ENCODE measurements at regions of chr15 and their contacts with region 1.

Region 1: GRCh38 chr15:61974759-61975158 is 85.5 kb downstream of the VPS13C start:
- DNase-seq: no peak
- ATAC-seq: no peak
- H3K4me3 ChIP-seq: no peak overlapping the region
- H3K27ac ChIP-seq: no peak overlapping the region
- H3K4me1 ChIP-seq: no peaks in the 10 kb centered on the region
- H3K27me3 ChIP-seq: no peaks in the 10 kb centered on the region
- CTCF ChIP-seq: no peak
- EP300 ChIP-seq: no peak
- POLR2A ChIP-seq: no peak
- RAD21 ChIP-seq: no peak

Region 2: GRCh38 chr15:61906961-61907752 is 67.6 kb before region 1 on chr15:
- CTCF ChIA-PET with region 1: no interaction called
- POLR2A ChIA-PET with region 1: no interaction called
- in situ Hi-C with region 1: no loop called
- intact Hi-C with region 1: no loop called
- DNase-seq: no peak
- ATAC-seq: no peak
- H3K4me3 ChIP-seq: no peak overlapping the region
- H3K27ac ChIP-seq: no peak overlapping the region
- H3K4me1 ChIP-seq: no peaks in the 10 kb centered on the region
- H3K27me3 ChIP-seq: no peaks in the 10 kb centered on the region
- CTCF ChIP-seq: no peak
- EP300 ChIP-seq: no peak
- POLR2A ChIP-seq: no peak
- RAD21 ChIP-seq: no peak

Region 3: GRCh38 chr15:62071711-62072308 is 97.1 kb after region 1 on chr15:
- CTCF ChIA-PET with region 1: no interaction called
- POLR2A ChIA-PET with region 1: no interaction called
- in situ Hi-C with region 1: no loop called
- intact Hi-C with region 1: loop called (anchors 10 kb)
- DNase-seq: peak; percentile 23 to 46 (median 30)
- ATAC-seq: no peak
- H3K4me3 ChIP-seq: no peak overlapping the region
- H3K27ac ChIP-seq: no peak overlapping the region
- H3K4me1 ChIP-seq: peaks cover 2 to 9% of the 10 kb centered on the region in 2 experiments; a peak in 4 of 5 replicates
- H3K27me3 ChIP-seq: peaks cover 4 to 10% of the 10 kb centered on the region in 2 experiments; a peak in 3 of 5 replicates
- CTCF ChIP-seq: peak; percentile 46 to 62 (median 46); a peak in 5 of 6 replicates
- EP300 ChIP-seq: no peak
- POLR2A ChIP-seq: no peak
- RAD21 ChIP-seq: peak; percentile 47 to 72